ENCODE measurements at regions of chr4 and their contacts with region 1.

Region 1: DNA sequence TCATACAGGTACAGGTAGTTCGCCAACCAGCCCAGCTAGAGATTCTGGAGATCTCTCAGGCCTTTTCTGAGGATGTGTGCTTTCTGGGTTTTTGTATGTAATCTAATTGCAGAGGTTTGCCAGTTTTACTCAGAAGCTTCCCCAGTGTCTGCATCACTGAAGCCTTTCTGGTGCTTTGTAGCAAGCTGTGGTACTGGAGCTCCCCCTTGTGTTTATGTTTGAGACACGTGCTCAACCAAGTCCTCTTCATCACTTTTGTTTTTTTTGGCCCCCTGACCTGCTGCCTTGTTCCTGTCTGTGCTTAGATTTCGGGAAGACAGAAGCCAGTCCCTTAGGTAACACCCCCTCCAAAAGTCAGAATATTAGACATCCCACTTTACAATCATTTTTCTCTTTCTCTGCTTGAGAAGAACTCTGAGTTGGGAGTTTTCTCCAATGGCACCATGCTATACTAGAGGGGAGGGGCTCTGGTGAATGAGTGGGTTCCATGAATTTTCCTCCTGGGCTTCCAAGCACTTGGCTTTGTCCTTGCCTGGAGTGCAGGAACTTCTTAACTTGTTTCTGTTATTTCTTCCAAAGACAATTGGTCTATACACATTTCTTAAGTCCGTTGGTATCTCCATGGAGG is 128.4 kb upstream of the TBC1D9 start:
- DNase-seq: peak; percentile 68
- H3K4me3 ChIP-seq: no peak overlapping the region
- H3K27ac ChIP-seq: no peak overlapping the region
- H3K4me1 ChIP-seq: no peaks in the 10 kb centered on the region
- H3K27me3 ChIP-seq: peaks cover 8 to 10% of the 10 kb centered on the region in 2 experiments
- CTCF ChIP-seq: peak; percentile 65 to 74
- POLR2A ChIP-seq: no peak

Region 2: GRCh38 chr4:140861359-140862176 is 23.0 kb before region 1 on chr4:
- CTCF ChIA-PET with region 1: interaction called, 72 read pairs
- POLR2A ChIA-PET with region 1: no interaction called
- dilution Hi-C with region 1: no loop called
- intact Hi-C with region 1: loop called (anchors 1 kb)
- DNase-seq: peak; percentile 79
- H3K4me3 ChIP-seq: no peak overlapping the region
- H3K27ac ChIP-seq: no peak overlapping the region
- H3K4me1 ChIP-seq: no peaks in the 10 kb centered on the region
- H3K27me3 ChIP-seq: peaks cover 8 to 23% of the 10 kb centered on the region in 2 experiments
- CTCF ChIP-seq: peak; percentile 54 to 65
- POLR2A ChIP-seq: no peak

Region 3: DNA sequence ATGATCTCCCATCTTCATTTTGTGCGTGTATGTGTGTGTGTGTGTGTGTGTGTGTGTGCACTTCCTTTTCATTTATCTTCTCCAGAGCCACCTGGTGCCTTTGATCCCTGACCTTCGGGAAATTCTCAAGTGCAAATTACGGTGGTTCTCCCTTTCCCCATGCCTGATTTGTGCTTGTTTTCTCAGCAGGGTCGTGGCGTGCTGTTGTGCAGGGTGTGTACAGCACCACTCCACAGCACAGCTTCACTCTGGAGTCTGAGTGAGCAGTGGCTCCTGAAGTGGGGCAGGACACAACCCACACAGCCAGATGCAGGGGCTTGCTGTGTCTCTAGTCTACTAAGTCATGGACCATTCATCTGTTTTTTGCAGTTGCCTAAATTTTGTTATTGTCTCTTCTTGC is 14.1 kb before region 1 on chr4:
- CTCF ChIA-PET with region 1: interaction called, 32 read pairs
- POLR2A ChIA-PET with region 1: no interaction called
- dilution Hi-C with region 1: no loop called
- intact Hi-C with region 1: loop called (anchors 1 kb)
- DNase-seq: no peak
- H3K4me3 ChIP-seq: no peak overlapping the region
- H3K27ac ChIP-seq: no peak overlapping the region
- H3K4me1 ChIP-seq: no peaks in the 10 kb centered on the region
- H3K27me3 ChIP-seq: peaks cover 10 to 54% of the 10 kb centered on the region in 2 experiments
- CTCF ChIP-seq: no peak
- POLR2A ChIP-seq: no peak

Region 4: DNA sequence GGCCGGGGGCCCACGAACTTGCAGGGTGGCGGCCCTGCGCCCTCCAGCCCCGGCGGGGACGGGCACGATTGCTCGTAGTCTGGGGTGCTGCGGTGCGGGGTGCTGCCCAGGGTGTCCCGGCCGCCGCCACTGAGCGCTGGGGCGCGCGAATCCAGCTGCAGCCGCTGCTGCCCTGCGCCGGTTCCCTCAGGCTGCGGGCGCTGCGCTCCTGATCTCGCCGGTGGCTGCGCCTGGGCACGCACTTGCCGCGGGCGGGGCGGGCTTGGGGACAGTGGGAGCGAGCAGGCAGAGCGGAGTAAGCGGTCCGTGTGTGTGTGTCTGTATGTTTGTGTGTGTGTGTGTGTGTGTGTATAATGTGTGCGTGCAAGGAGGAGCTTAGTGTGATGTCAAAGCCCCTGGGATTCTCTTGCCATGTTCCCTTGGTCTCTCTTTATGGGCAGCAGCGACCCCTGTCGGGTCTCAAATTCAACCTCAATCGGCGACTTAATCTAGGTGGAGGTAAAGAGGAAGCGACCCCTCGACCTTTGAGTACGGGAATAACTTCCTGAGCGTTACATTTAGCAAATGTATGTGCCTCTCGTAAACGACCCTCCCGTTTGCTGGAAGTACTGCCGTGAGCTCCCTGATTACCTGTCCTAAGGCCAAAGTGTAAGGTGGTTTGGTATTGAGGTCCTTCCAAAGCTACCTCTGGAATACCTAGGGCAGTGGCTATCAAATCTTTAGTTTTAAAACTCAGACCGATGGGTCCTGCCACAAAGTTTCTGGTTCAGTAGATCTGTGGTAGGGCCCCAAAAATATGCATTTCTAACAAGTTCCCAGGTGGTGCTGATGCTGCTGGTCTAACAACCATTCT is 248.8 kb after region 1 on chr4 and contains the start of gene RNF150:
- CTCF ChIA-PET with region 1: interaction called, 8 read pairs
- POLR2A ChIA-PET with region 1: no interaction called
- dilution Hi-C with region 1: no loop called
- intact Hi-C with region 1: loop called (anchors 1 kb)
- DNase-seq: peak; percentile 79
- H3K4me3 ChIP-seq: peak within 1 kb of the TSS; percentile 51 to 79 (median 56)
- H3K27ac ChIP-seq: no peak within 1 kb of the TSS
- H3K4me1 ChIP-seq: peaks cover 3% of the 10 kb centered on the region
- H3K27me3 ChIP-seq: peaks cover 29 to 62% of the 10 kb centered on the region in 2 experiments
- CTCF ChIP-seq: peak; percentile 54 to 64
- POLR2A ChIP-seq: no peak
- total RNA-seq, gene RNF150: 0.30 and 0.33 TPM in 2 replicates